PC-9 (cell line): ENCODE measurements at regions of chr9 and their contacts with region 1.

Region 1: GRCh38 chr9:92234514-92234913 is 59.0 kb downstream of the IARS1 start:
- DNase-seq: no peak
- H3K4me3 ChIP-seq: no peak overlapping the region
- H3K27ac ChIP-seq: no peak overlapping the region
- H3K4me1 ChIP-seq: no peaks in the 10 kb centered on the region
- H3K27me3 ChIP-seq: no peaks in the 10 kb centered on the region
- CTCF ChIP-seq: no peak

Region 2: DNA sequence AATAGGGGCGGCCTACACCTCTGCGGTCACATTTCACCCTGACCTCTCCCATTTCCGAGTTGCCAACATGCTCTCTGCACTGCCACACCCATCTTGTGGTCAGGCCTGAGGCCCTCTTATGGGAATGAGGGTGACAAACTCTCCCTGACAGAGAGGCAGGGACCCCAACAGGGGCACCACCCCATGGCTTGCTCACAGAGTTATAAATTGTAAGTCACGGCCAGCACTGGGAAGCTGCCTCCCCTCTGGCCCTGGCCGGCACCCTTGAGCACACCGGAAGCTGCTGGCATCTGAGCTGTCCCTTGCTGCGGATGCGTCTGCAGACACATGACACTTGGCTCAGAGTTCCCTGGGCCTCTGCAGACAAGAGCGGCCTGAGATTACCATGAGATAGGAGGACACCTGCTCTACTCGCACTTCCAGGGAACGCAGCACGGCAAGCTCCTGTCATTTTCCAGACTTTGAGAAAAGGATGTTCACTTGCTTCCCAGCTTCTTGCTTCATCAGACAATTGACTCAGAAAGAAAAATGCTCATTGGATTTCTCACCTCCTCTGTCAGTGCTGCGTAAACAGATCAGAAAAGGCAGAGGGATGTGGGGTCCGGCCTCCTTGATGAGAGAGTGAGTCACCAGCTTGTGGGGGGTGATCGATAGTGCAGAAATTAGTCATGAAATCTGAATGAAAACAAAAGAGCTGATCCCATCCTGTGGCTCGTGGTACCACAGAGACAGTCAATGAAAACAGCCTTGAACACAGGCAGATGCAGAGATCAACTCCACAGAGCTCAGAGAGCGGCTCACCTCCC is 1163.1 kb before region 1 on chr9:
- CTCF ChIA-PET with region 1: no interaction called
- POLR2A ChIA-PET with region 1: interaction called, 12 read pairs
- intact Hi-C with region 1: no loop called
- DNase-seq: peak; percentile 82 to 94
- H3K4me3 ChIP-seq: peak overlapping the region; percentile 23; the same call in 1 of the 2 replicates
- H3K27ac ChIP-seq: peak overlapping the region; percentile 87
- H3K4me1 ChIP-seq: peaks cover 23% of the 10 kb centered on the region
- H3K27me3 ChIP-seq: no peaks in the 10 kb centered on the region
- CTCF ChIP-seq: no peak

Region 3: GRCh38 chr9:92108122-92108521 is 126.4 kb before region 1 on chr9:
- CTCF ChIA-PET with region 1: no interaction called
- POLR2A ChIA-PET with region 1: no interaction called
- intact Hi-C with region 1: no loop called
- DNase-seq: no peak
- H3K4me3 ChIP-seq: no peak overlapping the region
- H3K27ac ChIP-seq: no peak overlapping the region
- H3K4me1 ChIP-seq: 0 out of 2 replicates have a peak, but pooled peaks cover under 1% of the 10 kb centered on the region
- H3K27me3 ChIP-seq: no peaks in the 10 kb centered on the region
- CTCF ChIP-seq: no peak